ENCODE measurements at regions of chr1 and their contacts with region 1.

Region 1: GRCh38 chr1:147627435-147628110 is 42.8 kb downstream of the ACP6 start:
- DNase-seq: peak in 1 of 2 donors; percentile 54
- ATAC-seq: peak in 1 of 2 donors; percentile 37
- H3K4me3 ChIP-seq: no peak overlapping the region
- H3K27ac ChIP-seq: no peak overlapping the region
- H3K4me1 ChIP-seq: peaks cover 31% of the 10 kb centered on the region in 2 donors
- H3K27me3 ChIP-seq: no peaks in the 10 kb centered on the region
- CTCF ChIP-seq: peak; percentile 77 to 89 (median 89)
- POLR2A ChIP-seq: no peak

Region 2: DNA sequence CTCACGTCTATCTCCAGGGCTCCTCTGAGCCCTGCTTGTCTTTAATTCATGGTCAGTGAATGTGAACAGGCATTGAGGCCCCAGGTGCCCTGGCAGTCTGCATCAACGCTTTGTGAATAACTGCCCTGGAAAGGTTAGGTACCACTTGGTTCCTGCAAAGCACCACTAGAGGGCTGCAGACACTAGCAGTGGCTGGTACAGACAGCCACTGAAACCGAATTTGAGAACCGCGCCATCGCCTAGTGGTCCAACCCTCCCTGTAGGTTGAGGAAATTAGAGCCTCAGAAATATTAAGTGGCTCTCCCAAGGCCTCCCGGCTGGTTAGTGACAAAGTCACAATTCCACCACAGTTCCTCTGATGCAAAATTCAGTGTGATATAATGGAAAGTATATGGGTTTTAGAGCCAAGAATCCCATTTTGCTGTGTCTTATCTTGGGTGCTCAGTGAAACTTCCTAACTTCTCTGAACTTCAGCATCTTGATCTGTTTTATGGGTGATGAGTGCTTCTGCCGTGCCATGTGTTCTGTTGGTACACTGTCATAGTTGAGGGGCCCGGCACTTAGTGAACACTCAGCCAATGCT is 132.5 kb before region 1 on chr1:
- in situ Hi-C with region 1: loop called in 1 of 4 experiments (anchors 5 kb)
- intact Hi-C with region 1: loop called (anchors 1 kb)
- DNase-seq: peak; percentile 32 to 59
- ATAC-seq: peak; percentile 92 to 95
- H3K4me3 ChIP-seq: no peak overlapping the region
- H3K27ac ChIP-seq: no peak overlapping the region
- H3K4me1 ChIP-seq: no peaks in the 10 kb centered on the region
- H3K27me3 ChIP-seq: no peaks in the 10 kb centered on the region
- CTCF ChIP-seq: peak; percentile 79 to 93 (median 81)
- POLR2A ChIP-seq: no peak

Region 3: DNA sequence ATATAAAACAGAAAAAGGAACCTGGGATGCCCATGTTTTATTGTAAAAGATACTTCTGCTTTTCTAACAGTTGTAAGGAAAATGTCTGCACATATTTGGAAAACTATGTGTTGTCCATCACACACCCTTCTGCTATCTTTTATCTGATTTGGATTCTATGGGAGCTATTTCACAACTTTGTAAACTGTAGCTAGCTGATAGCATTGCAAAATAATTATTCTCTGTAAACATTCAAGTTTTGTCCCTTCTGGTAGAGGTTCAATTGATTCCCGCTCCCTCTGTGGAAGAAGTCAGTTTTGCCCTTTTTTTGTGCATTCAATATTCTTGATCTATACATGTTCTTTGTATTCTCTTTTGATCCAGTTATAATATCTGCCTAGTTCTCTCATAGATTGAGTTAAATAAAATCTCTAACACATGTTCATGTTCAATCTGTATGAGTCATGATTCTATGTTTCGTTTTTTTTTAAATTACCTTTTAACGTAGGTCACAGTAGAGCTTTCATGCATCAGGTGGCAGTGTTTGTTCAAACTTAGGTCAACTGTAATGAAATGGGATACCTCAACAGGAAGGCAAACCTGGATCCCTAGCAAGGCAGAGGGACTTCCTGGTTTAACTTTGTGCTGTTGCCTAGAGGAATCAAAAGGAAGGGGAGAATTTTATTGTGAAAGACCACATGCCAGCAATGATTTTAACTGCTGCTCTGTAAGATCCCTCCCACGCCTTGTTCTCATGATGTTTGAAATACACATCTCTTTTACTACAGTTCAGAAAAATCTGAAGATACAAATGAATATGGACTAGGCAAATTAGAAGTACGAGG is 112.3 kb before region 1 on chr1:
- in situ Hi-C with region 1: loop called in 1 of 4 experiments (anchors 10 kb)
- intact Hi-C with region 1: loop called (anchors 1 kb)
- DNase-seq: peak; percentile 11 to 21
- ATAC-seq: peak; percentile 99 to 100
- H3K4me3 ChIP-seq: no peak overlapping the region
- H3K27ac ChIP-seq: peak overlapping the region in 3 of 4 donors; percentile 16 to 38 (median 32)
- H3K4me1 ChIP-seq: peaks cover 6 to 16% of the 10 kb centered on the region in 2 donors
- H3K27me3 ChIP-seq: no peaks in the 10 kb centered on the region
- CTCF ChIP-seq: peak in 4 of 5 experiments; percentile 29 to 48 (median 40)
- POLR2A ChIP-seq: no peak

Region 4: GRCh38 chr1:147599362-147600118 is 28.0 kb before region 1 on chr1:
- in situ Hi-C with region 1: no loop called
- intact Hi-C with region 1: loop called (anchors 1 kb)
- DNase-seq: peak; percentile 97
- ATAC-seq: peak; percentile 79 to 83
- H3K4me3 ChIP-seq: peak overlapping the region; percentile 74 to 97 (median 86)
- H3K27ac ChIP-seq: peak overlapping the region; percentile 88 to 98 (median 96)
- H3K4me1 ChIP-seq: peaks cover 20 to 33% of the 10 kb centered on the region in 2 donors
- H3K27me3 ChIP-seq: no peaks in the 10 kb centered on the region
- CTCF ChIP-seq: no peak
- POLR2A ChIP-seq: peak; percentile 96 to 98

Region 5: GRCh38 chr1:147700042-147701006 is 72.8 kb after region 1 on chr1:
- in situ Hi-C with region 1: loop called in 1 of 4 experiments (anchors 10 kb)
- intact Hi-C with region 1: no loop called
- DNase-seq: peak; percentile 27 to 40
- ATAC-seq: peak; percentile 76 to 78
- H3K4me3 ChIP-seq: no peak overlapping the region
- H3K27ac ChIP-seq: no peak overlapping the region
- H3K4me1 ChIP-seq: no peaks in the 10 kb centered on the region
- H3K27me3 ChIP-seq: no peaks in the 10 kb centered on the region
- CTCF ChIP-seq: peak; percentile 49 to 80 (median 69)
- POLR2A ChIP-seq: no peak

Measured in gastrocnemius medialis (tissue), 4 donors.